T-cell (primary cell): ENCODE measurements at regions of chr7 and their contacts with region 1.

Region 1: GRCh38 chr7:14177876-14178275 is 188.4 kb upstream of the ETV1 start:
- DNase-seq: no peak
- ATAC-seq: no peak
- H3K4me3 ChIP-seq: no peak overlapping the region
- H3K4me3 Mint-ChIP-seq: no peak overlapping the region
- H3K27ac ChIP-seq: no peak overlapping the region
- H3K27ac Mint-ChIP-seq: no peak overlapping the region
- H3K4me1 ChIP-seq: no peaks in the 10 kb centered on the region
- H3K4me1 Mint-ChIP-seq: no peaks in the 10 kb centered on the region
- H3K27me3 ChIP-seq: no peaks in the 10 kb centered on the region
- H3K27me3 Mint-ChIP-seq: peaks cover 0 to 3% of the 10 kb centered on the region in 2 donors

Region 2: GRCh38 chr7:14001139-14001538 is 176.7 kb before region 1 on chr7:
- CTCF ChIA-PET with region 1: no interaction called
- POLR2A ChIA-PET with region 1: interaction called in 1 of 2 experiments, 10 read pairs
- DNase-seq: no peak
- ATAC-seq: no peak
- H3K4me3 ChIP-seq: no peak overlapping the region
- H3K4me3 Mint-ChIP-seq: no peak overlapping the region
- H3K27ac ChIP-seq: no peak overlapping the region
- H3K27ac Mint-ChIP-seq: no peak overlapping the region
- H3K4me1 ChIP-seq: no peaks in the 10 kb centered on the region
- H3K4me1 Mint-ChIP-seq: no peaks in the 10 kb centered on the region
- H3K27me3 ChIP-seq: no peaks in the 10 kb centered on the region
- H3K27me3 Mint-ChIP-seq: no peaks in the 10 kb centered on the region

Region 3: DNA sequence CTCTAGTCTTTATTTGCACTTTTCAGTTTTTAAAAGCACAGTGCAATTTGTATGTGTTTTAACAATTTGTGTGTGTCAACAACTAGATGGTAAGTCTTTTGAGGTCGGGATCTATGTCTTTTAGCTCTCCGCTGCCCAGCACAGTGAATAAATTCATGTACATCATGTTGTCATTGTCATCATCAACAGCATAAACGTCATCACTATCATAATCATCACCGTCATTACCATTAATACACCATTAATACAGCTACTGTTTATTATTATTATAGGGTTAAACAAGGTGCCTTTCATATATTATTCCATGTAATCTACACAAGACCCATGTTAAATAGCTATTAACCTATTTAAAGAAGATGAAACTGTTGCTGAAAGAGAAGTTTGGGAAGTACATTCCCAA is 138.7 kb before region 1 on chr7:
- CTCF ChIA-PET with region 1: no interaction called
- POLR2A ChIA-PET with region 1: interaction called in 1 of 2 experiments, 11 read pairs
- DNase-seq: no peak
- ATAC-seq: no peak
- H3K4me3 ChIP-seq: no peak overlapping the region
- H3K4me3 Mint-ChIP-seq: no peak overlapping the region
- H3K27ac ChIP-seq: no peak overlapping the region
- H3K27ac Mint-ChIP-seq: no peak overlapping the region
- H3K4me1 ChIP-seq: no peaks in the 10 kb centered on the region
- H3K4me1 Mint-ChIP-seq: no peaks in the 10 kb centered on the region
- H3K27me3 ChIP-seq: no peaks in the 10 kb centered on the region
- H3K27me3 Mint-ChIP-seq: no peaks in the 10 kb centered on the region